Activated CD4-positive, alpha-beta T cell treated with anti-CD3 and anti-CD28 coated beads, Interleukin-2, amount 10 ng/mL, durations not matched to agents 24 days and 14 days (primary cell): ENCODE measurements at regions of chr3 and their contacts with region 1.

Region 1: GRCh38 chr3:196192036-196192523 is 19.1 kb downstream of the ZDHHC19 start:
- DNase-seq: peak; percentile 83
- H3K4me3 Mint-ChIP-seq: peak overlapping the region; percentile 76
- H3K27ac Mint-ChIP-seq: peak overlapping the region; percentile 99
- H3K4me1 Mint-ChIP-seq: peaks cover 43% of the 10 kb centered on the region
- H3K27me3 Mint-ChIP-seq: no peaks in the 10 kb centered on the region

Region 2: GRCh38 chr3:195850857-195851543 is 341.1 kb before region 1 on chr3:
- intact Hi-C with region 1: loop called (anchors 2 kb)
- DNase-seq: peak; percentile 97
- H3K4me3 Mint-ChIP-seq: peak overlapping the region; percentile 5
- H3K27ac Mint-ChIP-seq: no peak overlapping the region
- H3K4me1 Mint-ChIP-seq: peaks cover 9% of the 10 kb centered on the region
- H3K27me3 Mint-ChIP-seq: no peaks in the 10 kb centered on the region

Region 3: GRCh38 chr3:196020373-196020772 is 171.7 kb before region 1 on chr3:
- intact Hi-C with region 1: loop called (anchors 1 kb)
- DNase-seq: no peak
- H3K4me3 Mint-ChIP-seq: no peak overlapping the region
- H3K27ac Mint-ChIP-seq: no peak overlapping the region
- H3K4me1 Mint-ChIP-seq: peaks cover 2% of the 10 kb centered on the region
- H3K27me3 Mint-ChIP-seq: peaks cover 7% of the 10 kb centered on the region

Region 4: GRCh38 chr3:196073188-196073838 is 118.8 kb before region 1 on chr3:
- intact Hi-C with region 1: loop called (anchors 1 kb)
- DNase-seq: peak; percentile 92
- H3K4me3 Mint-ChIP-seq: no peak overlapping the region
- H3K27ac Mint-ChIP-seq: peak overlapping the region; percentile 20
- H3K4me1 Mint-ChIP-seq: peaks cover 34% of the 10 kb centered on the region
- H3K27me3 Mint-ChIP-seq: no peaks in the 10 kb centered on the region

Region 5: GRCh38 chr3:196081791-196082618 is 110.1 kb before region 1 on chr3 and contains the start of gene TFRC:
- intact Hi-C with region 1: loop called (anchors 1 kb)
- DNase-seq: peak; percentile 99
- H3K4me3 Mint-ChIP-seq: peak within 1 kb of the TSS; percentile 89
- H3K27ac Mint-ChIP-seq: peak within 1 kb of the TSS; percentile 92
- H3K4me1 Mint-ChIP-seq: peaks cover 34% of the 10 kb centered on the region
- H3K27me3 Mint-ChIP-seq: no peaks in the 10 kb centered on the region
- total RNA-seq, gene TFRC: 725 and 748 TPM in 2 replicates

Region 6: DNA sequence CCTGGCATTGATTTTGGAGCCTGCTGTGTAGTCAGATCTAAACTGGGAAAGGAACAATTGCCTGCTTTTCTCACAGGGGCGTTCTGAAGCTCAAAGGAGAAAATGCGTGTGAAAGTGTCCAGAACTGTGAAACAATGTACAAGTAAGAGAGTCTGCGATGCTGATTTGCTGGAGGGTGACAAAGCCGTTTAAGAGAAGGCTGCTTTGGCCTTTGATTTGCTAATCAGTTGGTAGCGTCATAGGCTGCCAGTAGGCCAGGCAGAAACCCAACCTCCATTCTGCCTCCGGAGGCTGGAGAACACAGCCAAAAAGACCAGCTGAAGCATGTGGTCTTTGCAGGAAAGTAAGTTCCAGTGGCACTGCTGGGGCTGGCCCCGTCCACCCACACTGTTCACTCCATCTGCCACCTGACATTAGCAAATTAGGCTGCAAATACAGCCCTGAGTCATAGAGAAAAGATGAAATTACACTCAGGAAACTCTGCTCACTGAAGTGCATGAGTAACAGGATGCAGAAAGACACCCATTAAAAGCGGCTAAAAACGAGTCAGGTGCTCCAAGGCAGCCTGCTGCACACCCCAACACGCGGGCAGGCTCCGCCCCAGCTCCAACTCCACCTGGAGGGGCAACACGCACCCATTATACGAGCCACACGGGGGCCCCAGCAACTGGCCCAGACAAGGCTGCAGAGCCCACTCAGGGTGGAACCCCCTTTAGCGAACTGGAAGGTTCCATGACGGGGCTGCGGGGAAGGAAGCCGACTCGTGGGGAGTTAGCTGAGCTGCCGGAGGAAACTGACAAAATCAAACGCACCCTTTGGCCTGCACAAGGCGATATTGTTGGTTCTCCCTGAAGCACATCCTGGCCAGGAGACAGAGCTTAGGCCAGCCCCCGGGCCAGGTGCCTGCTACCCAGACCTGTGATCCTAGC is 12.4 kb before region 1 on chr3:
- intact Hi-C with region 1: loop called (anchors 1 kb)
- DNase-seq: peak; percentile 95
- H3K4me3 Mint-ChIP-seq: peak overlapping the region; percentile 70
- H3K27ac Mint-ChIP-seq: peak overlapping the region; percentile 97
- H3K4me1 Mint-ChIP-seq: peaks cover 50% of the 10 kb centered on the region
- H3K27me3 Mint-ChIP-seq: no peaks in the 10 kb centered on the region

Region 7: GRCh38 chr3:196339493-196340254 is 147.6 kb after region 1 on chr3:
- intact Hi-C with region 1: no loop called
- DNase-seq: no peak
- H3K4me3 Mint-ChIP-seq: no peak overlapping the region
- H3K27ac Mint-ChIP-seq: no peak overlapping the region
- H3K4me1 Mint-ChIP-seq: peaks cover 2% of the 10 kb centered on the region
- H3K27me3 Mint-ChIP-seq: peaks cover 2% of the 10 kb centered on the region